Dorsolateral prefrontal cortex (tissue), 120 donors: ENCODE measurements at regions of chr10 and their contacts with region 1.

Region 1: DNA sequence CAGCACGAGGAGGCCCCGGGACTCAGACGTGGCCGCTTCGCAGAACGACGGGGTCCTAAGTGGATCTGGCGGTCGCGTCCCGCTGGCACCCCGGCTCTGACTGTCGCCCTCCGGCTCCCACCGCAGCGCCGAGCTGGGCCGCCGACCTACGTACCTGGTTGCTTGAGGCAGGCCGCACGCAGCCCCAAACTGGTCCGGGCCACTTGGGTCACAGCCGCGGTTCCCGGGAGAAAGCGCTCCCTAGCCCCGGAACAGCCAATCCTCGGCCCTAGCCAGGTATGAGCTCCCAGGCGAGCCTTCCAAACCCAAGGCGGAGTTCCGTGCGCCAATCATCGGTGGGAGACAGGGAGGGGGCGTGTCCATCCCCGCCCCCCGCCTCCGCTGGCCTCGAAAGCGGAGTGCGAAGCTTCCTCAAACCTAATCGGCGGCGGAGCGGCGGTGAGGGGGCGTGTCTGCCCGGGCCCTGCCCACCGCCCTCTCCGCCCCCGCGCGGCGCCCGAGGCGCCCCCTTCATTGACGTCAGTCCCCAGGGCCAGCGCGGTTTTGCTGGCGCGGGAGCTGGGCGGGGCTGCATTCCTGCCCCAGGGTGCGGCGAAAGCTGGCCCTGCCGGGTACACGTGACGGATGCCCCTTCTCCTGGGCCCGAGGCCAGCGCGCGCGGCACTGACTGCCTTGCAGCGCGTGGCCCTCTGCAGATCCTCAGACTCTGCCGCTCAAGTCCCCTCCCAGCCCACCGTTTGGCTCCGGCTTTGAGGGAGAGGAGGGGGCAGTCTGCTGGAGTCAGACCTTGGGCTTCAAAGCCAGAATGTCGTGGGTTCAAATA is at the start of gene AVPI1:
- DNase-seq: peak; percentile 85 to 96 (median 93)
- H3K4me3 ChIP-seq: peak within 1 kb of the TSS; percentile 43 to 93 (median 77)
- H3K27ac ChIP-seq: peak within 1 kb of the TSS; percentile 62 to 95 (median 91)
- H3K27me3 ChIP-seq: no peaks in the 10 kb centered on the region
- CTCF ChIP-seq: peak in 34 of 56 donors; percentile 4 to 64 (median 27)
- total RNA-seq, gene AVPI1: 15.7 to 41.1 (median 27.6) TPM

Region 2: DNA sequence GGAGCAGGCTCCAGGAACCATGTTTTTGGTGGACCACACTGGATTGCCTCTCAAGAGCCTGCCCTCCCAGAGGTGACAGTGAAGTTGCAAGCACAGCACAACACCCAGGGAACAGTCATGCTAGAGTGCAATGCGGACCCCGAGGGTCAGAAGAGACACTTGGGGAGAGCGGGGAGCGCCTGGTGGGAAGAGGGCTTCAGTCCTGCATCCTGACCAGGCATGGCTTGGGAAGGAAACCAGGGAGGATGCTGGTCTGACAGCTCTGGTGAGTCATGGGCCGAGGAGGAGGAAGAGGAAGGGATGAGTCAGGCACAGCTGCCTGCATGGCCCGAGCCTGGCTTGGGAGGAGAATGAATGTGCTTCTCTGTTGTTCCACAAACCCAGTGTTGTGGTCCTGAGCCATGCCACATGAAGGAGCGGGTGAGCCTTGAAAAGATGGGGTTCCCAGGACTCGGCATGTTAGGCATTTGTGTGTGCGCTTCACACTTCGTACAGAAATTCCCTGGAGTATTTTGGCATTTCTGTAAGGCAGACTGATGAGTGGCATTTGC is 144.1 kb before region 1 on chr10:
- intact Hi-C with region 1: no loop called
- DNase-seq: peak; percentile 33 to 97 (median 90)
- H3K4me3 ChIP-seq: peak overlapping the region in 11 of 59 donors; percentile 5 to 33 (median 13)
- H3K27ac ChIP-seq: peak overlapping the region; percentile 87 to 100 (median 97)
- H3K27me3 ChIP-seq: no peaks in the 10 kb centered on the region
- CTCF ChIP-seq: peak in 15 of 56 donors; percentile 6 to 39 (median 17)

Region 3: DNA sequence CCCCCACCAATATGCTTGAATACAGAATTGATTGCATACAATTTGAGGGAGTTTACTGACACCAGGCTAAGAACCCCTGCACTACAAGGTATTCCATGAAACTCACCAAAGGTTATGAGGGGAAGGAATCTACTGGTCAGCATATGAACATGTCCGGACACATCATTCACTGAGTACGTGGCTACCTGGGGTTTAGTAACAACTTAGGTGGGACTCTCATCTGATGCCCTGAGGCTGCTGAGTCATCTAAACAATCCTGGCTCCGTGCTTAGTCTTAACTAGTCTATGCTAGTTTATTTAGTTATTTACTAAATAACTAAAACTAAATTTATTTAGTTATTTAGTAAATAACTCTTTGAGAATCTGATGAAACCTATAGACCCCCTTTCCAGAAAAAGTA is 35.4 kb before region 1 on chr10:
- intact Hi-C with region 1: loop called in 1 of 2 experiments (anchors 2 kb)
- DNase-seq: no peak
- H3K4me3 ChIP-seq: no peak overlapping the region
- H3K27ac ChIP-seq: peak overlapping the region in 2 of 59 donors; percentile 1
- H3K27me3 ChIP-seq: no peaks in the 10 kb centered on the region
- CTCF ChIP-seq: no peak

Region 4: GRCh38 chr10:97736902-97737769 is 50.0 kb after region 1 on chr10 and contains the start of gene ZFYVE27:
- intact Hi-C with region 1: loop called (anchors 2 to 5 kb)
- DNase-seq: peak; percentile 91 to 96 (median 94)
- H3K4me3 ChIP-seq: peak within 1 kb of the TSS; percentile 71 to 100 (median 95)
- H3K27ac ChIP-seq: peak within 1 kb of the TSS; percentile 6 to 94 (median 81)
- H3K27me3 ChIP-seq: no peaks in the 10 kb centered on the region
- CTCF ChIP-seq: peak in 32 of 56 donors; percentile 7 to 52 (median 30)
- total RNA-seq, gene ZFYVE27: 47.7 to 82.7 (median 64.5) TPM